Endothelial cell of umbilical vein (primary cell): ENCODE measurements at regions of chr7 and their contacts with region 1.

Region 1: DNA sequence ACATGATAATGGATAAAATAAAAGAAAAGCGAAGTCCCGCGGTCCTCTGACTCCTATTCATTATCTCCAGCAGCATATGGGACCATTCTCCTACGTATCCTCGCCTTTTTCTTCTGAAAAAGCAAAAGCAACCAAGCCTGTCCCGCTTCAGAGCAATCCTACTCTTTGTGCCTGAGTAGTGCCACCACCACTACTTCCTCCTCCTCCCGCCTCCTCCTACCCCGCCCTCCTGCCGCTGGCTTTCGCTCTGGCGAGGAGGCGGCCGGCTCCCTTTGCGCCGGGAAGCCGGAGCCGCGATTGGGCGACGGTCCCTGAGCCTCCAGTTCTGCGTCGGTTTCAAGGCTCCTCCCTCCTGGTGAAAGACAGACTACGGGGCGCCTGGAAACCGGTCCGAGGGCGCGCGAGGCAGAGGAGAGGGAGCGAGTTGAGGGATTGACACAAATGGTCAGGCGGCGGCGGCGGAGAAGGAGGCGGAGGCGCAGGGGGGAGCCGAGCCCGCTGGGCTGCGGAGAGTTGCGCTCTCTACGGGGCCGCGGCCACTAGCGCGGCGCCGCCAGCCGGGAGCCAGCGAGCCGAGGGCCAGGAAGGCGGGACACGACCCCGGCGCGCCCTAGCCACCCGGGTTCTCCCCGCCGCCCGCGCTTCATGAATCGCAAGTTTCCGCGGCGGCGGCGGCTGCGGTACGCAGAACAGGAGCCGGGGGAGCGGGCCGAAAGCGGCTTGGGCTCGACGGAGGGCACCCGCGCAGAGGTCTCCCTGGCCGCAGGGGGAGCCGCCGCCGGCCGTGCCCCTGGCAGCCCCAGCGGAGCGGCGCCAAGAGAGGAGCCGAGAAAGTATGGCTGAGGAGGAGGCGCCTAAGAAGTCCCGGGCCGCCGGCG is at the start of gene FZD1:
- DNase-seq: peak; percentile 98
- H3K4me3 ChIP-seq: peak within 1 kb of the TSS; percentile 50 to 85 (median 71)
- H3K27ac ChIP-seq: peak within 1 kb of the TSS; percentile 65
- H3K4me1 ChIP-seq: peaks cover 6% of the 10 kb centered on the region
- H3K27me3 ChIP-seq: peaks cover 1 to 5% of the 10 kb centered on the region in 2 experiments
- CTCF ChIP-seq: peak in 1 of 2 donors; percentile 35
- POLR2A ChIP-seq: no peak
- total RNA-seq, gene FZD1: 3.2 and 3.4 TPM in 2 replicates

Region 2: DNA sequence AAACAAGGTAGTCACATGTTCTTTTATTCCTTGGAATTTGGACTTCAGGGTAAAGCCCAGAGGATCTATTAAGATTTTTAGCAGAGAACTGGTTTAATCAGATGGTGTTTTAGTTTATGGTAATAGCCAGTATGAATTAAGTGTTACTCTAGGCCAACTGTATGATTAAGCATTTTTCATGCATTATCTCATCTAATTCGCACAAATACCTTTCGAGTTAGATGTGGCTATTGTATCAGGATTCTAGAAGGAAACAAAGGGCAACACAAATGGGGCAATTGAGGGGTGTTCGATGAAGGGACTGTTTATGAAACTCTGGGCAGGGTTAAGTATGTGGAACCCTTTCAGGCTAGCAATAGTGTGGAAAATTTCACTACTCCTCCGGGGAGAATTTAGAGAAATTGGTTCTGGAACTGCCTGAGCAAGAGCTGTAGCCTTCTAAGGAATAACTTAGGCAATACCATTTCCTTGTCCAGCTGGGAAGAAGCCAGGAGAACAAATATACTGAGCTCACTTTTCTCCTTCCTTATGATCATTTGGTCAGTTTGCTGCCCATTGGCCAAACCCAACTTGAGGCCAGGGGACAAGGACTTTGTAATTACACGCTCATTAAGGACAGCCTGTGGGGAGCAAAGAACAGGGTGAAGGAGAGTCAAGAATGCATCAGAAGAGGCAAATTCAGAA is 319.0 kb before region 1 on chr7:
- CTCF ChIA-PET with region 1: no interaction called
- POLR2A ChIA-PET with region 1: no interaction called
- dilution Hi-C with region 1: no loop called
- intact Hi-C with region 1: no loop called
- DNase-seq: no peak
- H3K4me3 ChIP-seq: no peak overlapping the region
- H3K27ac ChIP-seq: no peak overlapping the region
- H3K4me1 ChIP-seq: no peaks in the 10 kb centered on the region
- H3K27me3 ChIP-seq: no peaks in the 10 kb centered on the region
- CTCF ChIP-seq: no peak
- POLR2A ChIP-seq: no peak

Region 3: GRCh38 chr7:91239171-91239604 is 25.1 kb before region 1 on chr7:
- CTCF ChIA-PET with region 1: no interaction called
- POLR2A ChIA-PET with region 1: no interaction called
- dilution Hi-C with region 1: no loop called
- intact Hi-C with region 1: loop called (anchors 1 kb)
- DNase-seq: peak; percentile 68
- H3K4me3 ChIP-seq: no peak overlapping the region
- H3K27ac ChIP-seq: no peak overlapping the region
- H3K4me1 ChIP-seq: peaks cover 12% of the 10 kb centered on the region
- H3K27me3 ChIP-seq: peaks cover 9 to 16% of the 10 kb centered on the region in 2 experiments
- CTCF ChIP-seq: no peak
- POLR2A ChIP-seq: peak; percentile 19

Region 4: GRCh38 chr7:91465595-91466061 is 201.3 kb after region 1 on chr7:
- CTCF ChIA-PET with region 1: no interaction called
- POLR2A ChIA-PET with region 1: no interaction called
- dilution Hi-C with region 1: no loop called
- intact Hi-C with region 1: loop called (anchors 1 kb)
- DNase-seq: peak; percentile 93
- H3K4me3 ChIP-seq: no peak overlapping the region
- H3K27ac ChIP-seq: peak overlapping the region; percentile 75
- H3K4me1 ChIP-seq: peaks cover 25% of the 10 kb centered on the region
- H3K27me3 ChIP-seq: no peaks in the 10 kb centered on the region
- CTCF ChIP-seq: no peak
- POLR2A ChIP-seq: no peak

Region 5: DNA sequence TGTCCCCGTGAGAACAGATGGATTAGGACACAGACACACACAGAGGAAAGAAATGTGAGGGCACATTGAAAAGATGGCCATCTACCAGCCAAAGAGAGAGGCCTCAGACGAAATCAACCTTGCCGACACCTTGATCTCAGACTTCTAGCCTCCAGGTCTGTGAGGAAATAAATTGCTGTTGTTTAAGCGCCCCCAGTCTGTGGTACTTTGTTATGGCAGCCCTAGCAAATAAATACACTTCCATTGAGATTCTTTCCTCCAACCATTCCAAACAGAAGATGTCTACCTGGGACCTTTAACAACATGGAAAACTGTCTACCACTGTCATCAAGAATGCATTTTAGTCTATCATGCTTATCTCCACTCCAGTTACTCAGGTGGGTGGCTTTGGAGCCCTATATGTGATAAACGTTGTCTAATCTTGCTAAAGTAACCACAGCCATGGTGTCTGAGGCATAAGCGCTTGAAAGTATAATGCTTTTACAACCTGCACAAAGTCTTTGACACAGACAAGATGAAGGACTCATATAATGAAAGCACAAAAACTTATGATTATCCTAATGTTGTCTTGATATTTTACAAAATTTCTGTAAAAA is 371.9 kb after region 1 on chr7:
- CTCF ChIA-PET with region 1: no interaction called
- POLR2A ChIA-PET with region 1: no interaction called
- dilution Hi-C with region 1: no loop called
- intact Hi-C with region 1: loop called (anchors 1 kb)
- DNase-seq: peak; percentile 57
- H3K4me3 ChIP-seq: no peak overlapping the region
- H3K27ac ChIP-seq: no peak overlapping the region
- H3K4me1 ChIP-seq: peaks cover 6% of the 10 kb centered on the region
- H3K27me3 ChIP-seq: peaks cover 0 to 3% of the 10 kb centered on the region in 2 experiments
- CTCF ChIP-seq: peak; percentile 58 to 65
- POLR2A ChIP-seq: no peak